ENCODE measurements at regions of chr22 and their contacts with region 1.

Region 1: GRCh38 chr22:45318168-45318557 is 8.4 kb downstream of the FAM118A start:
- DNase-seq: no peak

Region 2: GRCh38 chr22:45125188-45125587 is 193.0 kb before region 1 on chr22:
- intact Hi-C with region 1: no loop called
- DNase-seq: no peak

Region 3: DNA sequence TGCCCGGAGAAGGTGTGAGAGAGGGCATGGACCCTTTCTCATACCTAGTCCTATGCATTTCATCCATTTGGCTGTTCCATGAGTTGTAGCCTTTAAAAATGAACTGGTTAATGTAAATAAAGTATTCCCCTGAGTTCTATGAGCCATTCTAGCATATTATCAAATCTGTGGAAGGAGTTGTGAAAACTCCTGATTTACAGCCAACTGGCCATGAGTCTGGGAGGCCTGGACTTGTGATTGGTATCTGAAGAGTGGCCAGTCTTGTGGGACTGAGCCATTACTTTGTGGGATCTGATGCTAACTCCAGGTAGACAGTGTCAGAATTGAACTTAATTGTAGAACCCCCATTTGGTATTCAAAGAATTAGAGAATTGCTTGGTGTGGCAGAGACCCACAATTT is 40.0 kb after region 1 on chr22:
- intact Hi-C with region 1: no loop called
- DNase-seq: no peak

Region 4: GRCh38 chr22:45424231-45424731 is 106.1 kb after region 1 on chr22:
- intact Hi-C with region 1: no loop called
- DNase-seq: no peak

Region 5: DNA sequence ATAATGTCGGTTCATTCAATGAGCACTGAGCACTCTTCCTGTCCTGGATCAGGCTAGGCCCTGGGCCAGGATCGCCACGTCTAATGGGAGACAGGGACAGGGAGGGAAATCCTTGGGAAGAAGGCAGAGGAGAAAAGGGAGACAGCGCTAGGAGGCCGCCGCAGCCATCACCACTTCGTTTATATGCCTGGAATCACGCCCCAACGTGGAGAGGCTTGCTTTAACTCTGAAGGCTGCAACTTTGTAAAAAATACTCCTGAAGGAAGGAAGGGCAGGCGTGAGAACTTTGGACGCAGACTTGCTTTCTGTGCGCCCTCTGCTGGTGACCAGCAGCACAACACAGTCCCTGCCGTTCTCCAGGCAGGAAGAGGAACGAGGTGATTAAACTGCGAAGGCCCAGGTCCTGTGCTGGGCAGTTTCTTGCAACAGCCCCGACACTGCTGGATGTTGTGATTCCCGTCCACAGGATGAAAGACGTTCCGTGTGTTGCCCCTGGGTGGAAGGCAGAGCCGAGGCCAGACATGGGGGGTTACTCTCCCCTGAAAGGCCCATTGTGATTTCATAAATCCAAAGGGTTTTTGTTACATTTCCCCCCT is 117.5 kb after region 1 on chr22:
- intact Hi-C with region 1: loop called (anchors 5 kb)
- DNase-seq: peak; percentile 93

Measured in cardiac septum (tissue), 1 donor.